ENCODE measurements at regions of chr10 and their contacts with region 1.

Region 1: GRCh38 chr10:114550756-114551635 is 107.1 kb downstream of the ABLIM1 start:
- DNase-seq: peak in 1 of 4 experiments; percentile 5
- ATAC-seq: no peak
- H3K4me3 ChIP-seq: no peak overlapping the region
- H3K27ac ChIP-seq: no peak overlapping the region
- H3K4me1 ChIP-seq: no peaks in the 10 kb centered on the region
- H3K27me3 ChIP-seq: no peaks in the 10 kb centered on the region
- CTCF ChIP-seq: peak in 2 of 3 experiments; percentile 29 to 39; a peak in 2 of 6 replicates
- EP300 ChIP-seq: no peak
- POLR2A ChIP-seq: no peak
- RAD21 ChIP-seq: peak; percentile 37 to 54

Region 2: DNA sequence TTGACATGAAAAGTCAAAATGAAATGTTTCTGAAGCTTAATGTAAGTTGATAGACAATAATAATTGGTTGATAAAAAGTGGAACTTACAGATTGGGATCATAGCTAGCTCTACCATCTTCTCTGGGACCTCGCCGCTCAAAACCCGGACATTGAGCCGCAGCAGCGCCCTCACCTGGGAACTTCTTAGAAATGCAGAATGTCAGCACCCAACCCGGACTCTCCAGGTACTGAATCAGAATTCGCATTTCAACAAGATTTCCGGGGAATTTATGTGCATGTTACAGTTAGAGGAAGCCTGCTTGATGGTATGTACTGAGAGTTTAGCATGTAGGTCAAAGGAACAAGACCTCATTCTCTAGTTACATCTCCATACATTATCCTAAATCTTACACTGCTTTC is 143.8 kb after region 1 on chr10:
- CTCF ChIA-PET with region 1: no interaction called
- POLR2A ChIA-PET with region 1: no interaction called
- in situ Hi-C with region 1: loop called (anchors 10 kb)
- intact Hi-C with region 1: loop called (anchors 5 kb)
- DNase-seq: peak; percentile 29 to 38 (median 36)
- ATAC-seq: peak; percentile 64; the same call in 2 of the 3 replicates
- H3K4me3 ChIP-seq: no peak overlapping the region
- H3K27ac ChIP-seq: no peak overlapping the region
- H3K4me1 ChIP-seq: no peaks in the 10 kb centered on the region
- H3K27me3 ChIP-seq: no peaks in the 10 kb centered on the region; a peak in 1 of 5 replicates
- CTCF ChIP-seq: peak; percentile 49 to 62 (median 52)
- EP300 ChIP-seq: no peak
- POLR2A ChIP-seq: no peak
- RAD21 ChIP-seq: peak in 1 of 2 experiments; percentile 53; a peak in 2 of 4 replicates

Region 3: DNA sequence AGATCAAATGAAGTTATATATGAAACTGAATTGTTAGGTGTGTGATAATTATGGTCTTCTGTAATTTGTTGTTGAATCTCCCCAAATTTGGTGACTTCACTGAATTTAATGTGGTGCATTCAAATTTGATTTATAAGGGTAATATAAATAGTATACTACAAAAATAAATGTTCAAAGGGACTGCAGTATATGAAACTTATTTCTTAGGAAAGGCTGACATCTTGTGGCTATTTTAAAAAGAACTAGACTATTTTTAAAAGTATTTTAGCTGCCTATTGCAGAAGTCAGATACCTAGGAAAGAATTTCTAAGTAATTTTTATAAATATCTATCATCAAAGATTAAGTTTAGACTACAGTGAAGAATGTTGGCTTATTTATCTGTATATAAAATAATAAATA is 578.8 kb after region 1 on chr10:
- CTCF ChIA-PET with region 1: interaction called, 5 read pairs
- POLR2A ChIA-PET with region 1: no interaction called
- in situ Hi-C with region 1: no loop called
- intact Hi-C with region 1: loop called (anchors 2 kb)
- DNase-seq: peak in 1 of 4 experiments; percentile 8
- ATAC-seq: no peak
- H3K4me3 ChIP-seq: no peak overlapping the region
- H3K27ac ChIP-seq: no peak overlapping the region
- H3K4me1 ChIP-seq: no peaks in the 10 kb centered on the region
- H3K27me3 ChIP-seq: no peaks in the 10 kb centered on the region
- CTCF ChIP-seq: peak in 1 of 3 experiments; percentile 42; a peak in 2 of 6 replicates
- EP300 ChIP-seq: no peak
- POLR2A ChIP-seq: no peak
- RAD21 ChIP-seq: peak; percentile 53